K562 (cell line): ENCODE measurements at regions of chr12 and their contacts with region 1.

Region 1: DNA sequence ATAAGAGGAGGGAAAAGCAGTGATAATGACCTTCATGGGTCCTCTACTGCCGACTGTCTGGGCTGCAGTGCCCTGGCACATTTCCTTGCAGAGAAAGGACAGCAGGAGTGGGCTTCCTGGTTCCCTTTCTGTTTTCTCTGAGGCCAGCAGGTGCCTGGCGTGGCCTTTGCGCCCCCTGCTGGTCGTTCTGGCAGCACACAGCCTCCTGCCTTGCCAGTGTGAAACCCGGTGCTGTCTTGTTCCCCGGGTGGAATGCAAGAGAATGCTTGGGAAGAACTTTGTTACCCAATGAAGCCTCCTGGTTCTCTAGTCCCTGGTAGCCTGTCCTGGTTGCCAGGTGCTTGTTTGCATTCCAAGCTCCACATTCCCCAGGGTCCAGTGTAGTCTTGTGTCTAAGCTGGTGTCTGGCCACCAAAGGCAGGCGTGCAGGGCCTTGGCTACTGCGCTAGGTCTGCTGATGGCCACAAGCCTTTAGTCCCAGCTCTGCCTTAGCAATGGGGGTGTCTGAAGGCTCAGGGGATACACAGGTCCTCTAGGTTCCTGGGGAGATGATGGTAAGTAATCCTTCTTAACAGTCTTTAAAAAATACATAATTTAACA is 1392.4 kb upstream of the TMEM132C start:
- DNase-seq: peak; percentile 76 to 87 (median 79)
- ATAC-seq: peak; percentile 96
- H3K4me3 ChIP-seq: no peak overlapping the region
- H3K27ac ChIP-seq: no peak overlapping the region
- H3K4me1 ChIP-seq: peaks cover 12 to 15% of the 10 kb centered on the region in 2 experiments; a peak in 4 of 5 replicates
- H3K27me3 ChIP-seq: no peaks in the 10 kb centered on the region
- CTCF ChIP-seq: peak; percentile 93 to 99 (median 94)
- EP300 ChIP-seq: no peak
- POLR2A ChIP-seq: no peak
- RAD21 ChIP-seq: peak; percentile 69 to 93

Region 2: GRCh38 chr12:126784328-126784921 is 90.1 kb before region 1 on chr12:
- CTCF ChIA-PET with region 1: no interaction called
- POLR2A ChIA-PET with region 1: no interaction called
- in situ Hi-C with region 1: no loop called
- intact Hi-C with region 1: loop called (anchors 1 kb)
- DNase-seq: peak; percentile 31 to 79 (median 47)
- ATAC-seq: peak; percentile 93
- H3K4me3 ChIP-seq: no peak overlapping the region
- H3K27ac ChIP-seq: no peak overlapping the region
- H3K4me1 ChIP-seq: no peaks in the 10 kb centered on the region; a peak in 2 of 5 replicates
- H3K27me3 ChIP-seq: peaks cover 0 to 4% of the 10 kb centered on the region in 2 experiments; a peak in 3 of 5 replicates
- CTCF ChIP-seq: peak; percentile 87 to 94 (median 92)
- EP300 ChIP-seq: no peak
- POLR2A ChIP-seq: no peak
- RAD21 ChIP-seq: peak; percentile 72 to 88